ENCODE measurements at regions of chr21 and their contacts with region 1.

Region 1: GRCh38 chr21:33588485-33589335 is at the start of gene DONSON:
- DNase-seq: peak; percentile 77 to 91
- H3K4me3 ChIP-seq: peak within 1 kb of the TSS; percentile 70
- H3K4me1 ChIP-seq: peaks cover 9% of the 10 kb centered on the region
- H3K27me3 ChIP-seq: no peaks in the 10 kb centered on the region

Region 2: GRCh38 chr21:33348706-33349105 is 240.0 kb before region 1 on chr21:
- in situ Hi-C with region 1: no loop called
- DNase-seq: no peak
- H3K4me3 ChIP-seq: no peak overlapping the region
- H3K4me1 ChIP-seq: no peaks in the 10 kb centered on the region
- H3K27me3 ChIP-seq: no peaks in the 10 kb centered on the region

Region 3: GRCh38 chr21:33479679-33480480 is 108.8 kb before region 1 on chr21 and contains the start of gene TMEM50B:
- in situ Hi-C with region 1: loop called (anchors 25 kb)
- DNase-seq: peak; percentile 88 to 97
- H3K4me3 ChIP-seq: peak within 1 kb of the TSS; percentile 86
- H3K4me1 ChIP-seq: no peaks in the 10 kb centered on the region
- H3K27me3 ChIP-seq: no peaks in the 10 kb centered on the region